ENCODE measurements at regions of chr5 and their contacts with region 1.

Region 1: DNA sequence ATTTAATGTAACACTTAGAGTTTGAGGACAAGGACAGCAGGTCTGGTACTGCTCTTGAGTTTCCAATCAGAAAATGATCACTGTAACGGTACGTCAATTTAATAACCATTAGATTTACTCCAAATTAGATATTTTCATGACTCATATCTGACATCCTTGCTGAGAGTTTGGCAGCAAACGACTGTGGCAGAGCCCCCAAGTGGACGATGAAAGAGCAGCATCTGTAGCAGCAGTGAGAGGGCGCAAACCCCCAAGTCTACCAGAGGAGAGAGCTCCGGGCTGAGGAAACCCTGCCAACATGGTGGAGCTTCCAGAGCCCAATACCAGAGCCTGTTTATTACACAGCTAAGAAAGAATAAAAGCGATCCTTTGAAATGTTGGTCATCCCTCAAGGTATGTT is 73.2 kb upstream of the EPB41L4A start:
- DNase-seq: peak; percentile 12
- ATAC-seq: peak; percentile 100
- H3K4me3 ChIP-seq: no peak overlapping the region
- H3K27ac ChIP-seq: no peak overlapping the region
- H3K4me1 ChIP-seq: no peaks in the 10 kb centered on the region
- H3K27me3 ChIP-seq: no peaks in the 10 kb centered on the region; a peak in 1 of 4 replicates
- CTCF ChIP-seq: peak; percentile 79 to 86 (median 85)
- EP300 ChIP-seq: no peak
- POLR2A ChIP-seq: no peak
- RAD21 ChIP-seq: peak; percentile 69

Region 2: GRCh38 chr5:112070022-112070421 is 422.3 kb before region 1 on chr5:
- CTCF ChIA-PET with region 1: no interaction called
- POLR2A ChIA-PET with region 1: no interaction called
- RAD21 ChIA-PET with region 1: no interaction called
- SMC1A ChIA-PET with region 1: no interaction called
- in situ Hi-C with region 1: no loop called
- intact Hi-C with region 1: no loop called
- DNase-seq: no peak
- ATAC-seq: no peak
- H3K4me3 ChIP-seq: no peak overlapping the region
- H3K27ac ChIP-seq: no peak overlapping the region
- H3K4me1 ChIP-seq: no peaks in the 10 kb centered on the region
- H3K27me3 ChIP-seq: no peaks in the 10 kb centered on the region
- CTCF ChIP-seq: no peak
- EP300 ChIP-seq: no peak
- POLR2A ChIP-seq: no peak
- RAD21 ChIP-seq: no peak

Region 3: GRCh38 chr5:112479407-112479806 is 12.9 kb before region 1 on chr5:
- CTCF ChIA-PET with region 1: interaction called, 10 read pairs
- POLR2A ChIA-PET with region 1: no interaction called
- RAD21 ChIA-PET with region 1: no interaction called
- SMC1A ChIA-PET with region 1: interaction called, 13 read pairs
- in situ Hi-C with region 1: no loop called
- intact Hi-C with region 1: no loop called
- DNase-seq: no peak
- ATAC-seq: peak; percentile 57
- H3K4me3 ChIP-seq: no peak overlapping the region
- H3K27ac ChIP-seq: no peak overlapping the region
- H3K4me1 ChIP-seq: no peaks in the 10 kb centered on the region
- H3K27me3 ChIP-seq: no peaks in the 10 kb centered on the region
- CTCF ChIP-seq: no peak
- EP300 ChIP-seq: no peak
- POLR2A ChIP-seq: no peak
- RAD21 ChIP-seq: no peak

Region 4: DNA sequence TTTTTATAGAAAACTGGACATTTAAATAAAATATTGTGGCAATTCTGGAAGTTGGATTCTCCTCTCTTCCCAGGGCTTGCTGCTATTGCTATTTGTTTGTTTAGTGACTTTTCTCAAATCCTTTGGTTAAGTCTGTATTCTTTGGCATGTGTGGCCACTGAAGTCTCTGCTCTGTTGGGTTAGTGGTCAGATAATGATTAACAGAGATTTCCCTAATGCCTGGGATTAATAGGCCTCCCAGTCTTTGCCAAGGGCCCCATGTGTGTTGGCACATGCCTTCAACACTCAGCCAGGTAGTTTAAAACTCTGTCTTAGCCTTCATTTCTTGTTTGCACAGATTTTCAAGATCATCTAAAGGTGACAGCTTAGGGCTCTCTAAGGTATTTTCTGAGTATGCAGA is 19.6 kb after region 1 on chr5:
- CTCF ChIA-PET with region 1: interaction called, 63 read pairs
- POLR2A ChIA-PET with region 1: no interaction called
- RAD21 ChIA-PET with region 1: no interaction called
- SMC1A ChIA-PET with region 1: interaction called, 18 read pairs
- in situ Hi-C with region 1: no loop called
- intact Hi-C with region 1: no loop called
- DNase-seq: no peak
- ATAC-seq: no peak
- H3K4me3 ChIP-seq: no peak overlapping the region
- H3K27ac ChIP-seq: no peak overlapping the region
- H3K4me1 ChIP-seq: no peaks in the 10 kb centered on the region
- H3K27me3 ChIP-seq: no peaks in the 10 kb centered on the region
- CTCF ChIP-seq: no peak
- EP300 ChIP-seq: no peak
- POLR2A ChIP-seq: no peak
- RAD21 ChIP-seq: no peak

Region 5: GRCh38 chr5:112529525-112529924 is 37.2 kb after region 1 on chr5:
- CTCF ChIA-PET with region 1: interaction called, 195 read pairs
- POLR2A ChIA-PET with region 1: interaction called, 4 read pairs
- RAD21 ChIA-PET with region 1: interaction called, 81 read pairs
- SMC1A ChIA-PET with region 1: interaction called, 166 read pairs
- in situ Hi-C with region 1: no loop called
- intact Hi-C with region 1: loop called (anchors 2 kb)
- DNase-seq: no peak
- ATAC-seq: peak; percentile 71
- H3K4me3 ChIP-seq: no peak overlapping the region
- H3K27ac ChIP-seq: no peak overlapping the region
- H3K4me1 ChIP-seq: peaks cover 26% of the 10 kb centered on the region
- H3K27me3 ChIP-seq: no peaks in the 10 kb centered on the region
- CTCF ChIP-seq: peak; percentile 57 to 61 (median 58); a peak in 5 of 6 replicates
- EP300 ChIP-seq: no peak
- POLR2A ChIP-seq: no peak
- RAD21 ChIP-seq: peak; percentile 65

Region 6: GRCh38 chr5:112653638-112654205 is 161.4 kb after region 1 on chr5:
- CTCF ChIA-PET with region 1: no interaction called
- POLR2A ChIA-PET with region 1: no interaction called
- RAD21 ChIA-PET with region 1: no interaction called
- SMC1A ChIA-PET with region 1: no interaction called
- in situ Hi-C with region 1: no loop called
- intact Hi-C with region 1: no loop called
- DNase-seq: no peak
- ATAC-seq: no peak
- H3K4me3 ChIP-seq: no peak overlapping the region
- H3K27ac ChIP-seq: no peak overlapping the region
- H3K4me1 ChIP-seq: no peaks in the 10 kb centered on the region
- H3K27me3 ChIP-seq: peaks cover 0 to 1% of the 10 kb centered on the region in 2 experiments; a peak in 1 of 4 replicates
- CTCF ChIP-seq: no peak
- EP300 ChIP-seq: no peak
- POLR2A ChIP-seq: no peak
- RAD21 ChIP-seq: no peak

Measured in GM12878 (cell line).